ENCODE measurements at regions of chr14 and their contacts with region 1.

Region 1: DNA sequence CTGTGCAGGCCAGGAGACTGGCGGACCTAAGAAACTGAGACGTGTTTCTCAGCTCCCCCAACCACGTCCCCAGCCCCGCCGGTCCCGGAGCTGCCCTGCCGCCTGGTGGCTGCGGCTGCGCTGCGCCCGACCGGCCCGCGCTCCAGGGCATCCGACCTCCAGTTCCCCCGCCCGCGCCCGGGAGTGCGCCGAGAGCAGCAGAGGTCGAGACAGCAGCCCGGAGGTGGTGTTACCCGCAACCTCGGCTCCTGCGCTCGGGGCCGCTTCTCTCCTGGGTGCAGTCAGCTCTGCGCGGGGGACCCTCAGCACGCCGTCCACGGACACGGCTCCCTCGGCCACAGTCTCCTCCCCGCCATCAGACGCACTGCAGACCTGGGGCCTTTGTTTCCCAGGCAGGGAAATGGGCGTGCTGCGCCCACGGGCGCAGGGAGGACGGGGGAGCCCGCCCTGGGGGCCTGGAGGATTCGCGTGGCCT is 21.6 kb upstream of the GPR132 start:
- DNase-seq: peak; percentile 68
- H3K4me3 ChIP-seq: peak overlapping the region; percentile 25 to 39 (median 30)
- H3K27ac ChIP-seq: no peak overlapping the region
- H3K4me1 ChIP-seq: peaks cover 19% of the 10 kb centered on the region
- H3K27me3 ChIP-seq: peaks cover 0 to 2% of the 10 kb centered on the region in 2 experiments
- CTCF ChIP-seq: peak; percentile 82 to 89
- POLR2A ChIP-seq: no peak

Region 2: DNA sequence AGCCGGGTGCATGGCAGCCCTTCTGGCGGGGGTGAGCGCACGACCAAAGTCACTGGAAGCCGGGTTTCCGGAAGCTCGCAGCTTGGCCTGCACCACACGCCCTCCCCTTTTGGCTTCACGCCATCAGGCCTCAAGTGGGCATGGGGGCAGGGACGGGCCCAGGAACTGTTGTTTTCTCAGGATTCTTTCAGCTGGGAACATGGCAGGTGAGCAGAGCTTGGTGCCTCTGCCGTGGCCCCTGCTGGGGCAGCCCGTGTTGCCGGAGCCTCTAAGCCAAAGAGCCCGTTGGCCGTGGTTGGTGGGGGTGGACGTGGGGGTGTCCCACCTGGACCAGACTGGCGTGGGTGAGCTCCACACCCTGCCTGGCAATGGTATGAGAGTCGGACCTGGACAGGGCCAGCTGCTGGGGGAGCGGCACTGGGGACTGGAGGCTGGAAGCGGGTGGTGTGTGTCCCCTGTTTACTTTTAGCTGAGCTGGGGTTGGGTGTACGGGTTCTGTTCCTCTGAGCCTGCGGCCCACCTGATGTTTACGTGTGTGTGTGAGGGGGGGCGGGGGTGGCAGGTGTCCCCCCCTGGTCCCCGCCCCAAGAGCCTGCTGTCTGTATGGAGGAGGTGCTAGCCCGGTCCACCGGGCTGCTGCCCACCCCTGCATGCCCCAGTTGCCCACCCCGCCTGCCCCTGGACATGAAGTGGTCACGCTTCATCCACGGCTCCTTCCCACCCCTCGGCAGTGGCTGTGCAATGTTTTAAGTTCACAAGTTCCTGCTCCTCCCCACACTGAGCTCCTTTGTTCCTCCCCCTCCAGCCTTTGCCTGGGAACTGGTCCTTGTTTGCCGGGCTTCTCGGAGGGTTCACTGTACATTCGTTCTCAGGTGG is 190.8 kb before region 1 on chr14:
- CTCF ChIA-PET with region 1: interaction called, 6 read pairs
- POLR2A ChIA-PET with region 1: no interaction called
- dilution Hi-C with region 1: no loop called
- intact Hi-C with region 1: loop called (anchors 1 kb)
- DNase-seq: no peak
- H3K4me3 ChIP-seq: no peak overlapping the region
- H3K27ac ChIP-seq: no peak overlapping the region
- H3K4me1 ChIP-seq: peaks cover 16% of the 10 kb centered on the region
- H3K27me3 ChIP-seq: no peaks in the 10 kb centered on the region
- CTCF ChIP-seq: no peak
- POLR2A ChIP-seq: no peak

Region 3: DNA sequence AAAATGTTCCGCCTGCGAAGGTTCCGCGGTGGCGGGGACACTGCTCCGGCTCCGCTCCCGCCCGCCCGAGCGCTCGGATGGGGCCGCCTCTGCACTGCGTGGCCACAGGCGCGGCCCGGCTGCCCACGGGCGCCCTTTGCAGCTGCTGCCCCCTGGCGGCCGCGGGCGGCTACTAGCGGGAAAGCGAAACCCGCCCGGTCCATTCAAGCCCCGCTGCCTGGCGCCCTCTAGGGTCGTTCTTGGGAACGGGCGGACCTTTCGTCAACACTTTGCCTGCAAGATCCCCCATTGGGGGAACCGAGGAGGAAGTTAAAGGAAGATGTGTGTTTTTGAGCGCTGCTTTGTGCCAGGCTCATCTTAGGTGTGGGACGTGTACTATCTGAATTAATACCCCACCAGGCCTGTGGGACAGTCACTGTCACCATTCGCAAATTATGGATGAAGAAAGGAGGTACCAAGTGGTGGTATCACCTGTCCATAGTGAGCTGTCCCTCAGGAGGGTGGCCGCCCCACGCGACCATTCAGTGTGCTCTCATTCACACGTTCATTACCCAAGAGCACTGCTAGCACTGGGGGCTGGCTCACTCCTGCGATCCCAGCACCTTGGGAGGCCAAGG is 41.1 kb before region 1 on chr14:
- CTCF ChIA-PET with region 1: interaction called, 16 read pairs
- POLR2A ChIA-PET with region 1: no interaction called
- dilution Hi-C with region 1: no loop called
- intact Hi-C with region 1: no loop called
- DNase-seq: peak; percentile 81
- H3K4me3 ChIP-seq: no peak overlapping the region
- H3K27ac ChIP-seq: no peak overlapping the region
- H3K4me1 ChIP-seq: no peaks in the 10 kb centered on the region
- H3K27me3 ChIP-seq: peaks cover 3 to 9% of the 10 kb centered on the region in 2 experiments
- CTCF ChIP-seq: peak; percentile 100
- POLR2A ChIP-seq: no peak

Region 4: DNA sequence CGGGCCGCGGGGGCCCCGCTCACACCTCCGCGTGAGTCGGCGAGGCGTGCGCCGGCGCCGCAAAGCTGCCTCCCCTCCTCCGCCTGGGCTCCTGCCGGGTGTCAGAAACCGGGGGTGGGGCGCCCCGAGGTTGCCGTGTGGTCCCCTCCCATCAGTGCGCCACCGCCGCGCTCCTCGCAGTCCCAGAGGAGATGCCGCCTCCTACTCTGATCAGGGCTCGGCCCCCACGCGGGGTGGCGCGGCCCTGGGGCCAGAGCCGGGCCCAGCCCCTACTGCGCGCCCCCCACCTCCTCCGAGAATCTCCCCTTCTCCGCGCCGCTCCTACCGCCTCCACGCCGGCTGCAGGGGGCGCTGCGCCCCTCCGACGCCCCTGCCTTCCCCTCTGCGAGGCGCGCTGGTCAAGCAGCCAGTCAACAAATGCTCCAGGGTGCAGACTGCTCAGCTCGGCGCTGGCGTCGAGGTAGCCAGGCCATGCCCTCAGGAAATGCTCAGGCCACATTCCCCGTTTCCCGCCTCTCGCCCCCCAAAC is 82.2 kb after region 1 on chr14:
- CTCF ChIA-PET with region 1: interaction called, 15 read pairs
- POLR2A ChIA-PET with region 1: no interaction called
- dilution Hi-C with region 1: no loop called
- intact Hi-C with region 1: no loop called
- DNase-seq: peak; percentile 81
- H3K4me3 ChIP-seq: peak overlapping the region; percentile 11 to 41 (median 16)
- H3K27ac ChIP-seq: peak overlapping the region; percentile 2
- H3K4me1 ChIP-seq: peaks cover 39% of the 10 kb centered on the region
- H3K27me3 ChIP-seq: no peaks in the 10 kb centered on the region
- CTCF ChIP-seq: peak; percentile 86 to 92
- POLR2A ChIP-seq: no peak

Region 5: DNA sequence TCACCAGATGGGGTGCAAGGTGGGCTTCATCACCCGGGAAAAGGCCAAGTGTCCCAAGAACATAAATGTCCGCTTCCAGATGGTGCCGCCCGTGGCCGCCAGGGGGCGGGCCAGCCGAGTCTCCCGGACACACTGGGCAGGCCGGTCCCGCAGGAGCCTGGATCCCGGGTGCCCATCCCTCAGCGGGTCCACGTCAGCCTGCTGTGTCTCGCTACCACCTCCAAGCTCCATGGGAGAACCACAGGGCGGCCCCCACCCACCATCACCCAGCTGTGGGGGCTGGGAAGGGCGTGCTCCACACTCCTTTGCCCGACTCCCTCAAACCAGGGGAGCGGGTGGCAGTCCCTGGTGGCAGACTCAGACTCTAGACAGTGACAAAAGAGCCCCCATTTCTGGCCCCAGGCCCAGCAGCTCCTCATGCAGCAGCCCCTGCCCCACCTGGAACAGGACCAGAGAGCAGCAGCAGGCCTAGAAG is 116.2 kb after region 1 on chr14:
- CTCF ChIA-PET with region 1: interaction called, 17 read pairs
- POLR2A ChIA-PET with region 1: no interaction called
- dilution Hi-C with region 1: no loop called
- intact Hi-C with region 1: no loop called
- DNase-seq: peak; percentile 55
- H3K4me3 ChIP-seq: no peak overlapping the region
- H3K27ac ChIP-seq: no peak overlapping the region
- H3K4me1 ChIP-seq: peaks cover 24% of the 10 kb centered on the region
- H3K27me3 ChIP-seq: no peaks in the 10 kb centered on the region
- CTCF ChIP-seq: peak; percentile 94 to 96
- POLR2A ChIP-seq: no peak

Region 6: GRCh38 chr14:105292826-105293711 is 206.2 kb after region 1 on chr14:
- CTCF ChIA-PET with region 1: interaction called, 13 read pairs
- POLR2A ChIA-PET with region 1: no interaction called
- dilution Hi-C with region 1: no loop called
- intact Hi-C with region 1: no loop called
- DNase-seq: peak; percentile 64
- H3K4me3 ChIP-seq: no peak overlapping the region
- H3K27ac ChIP-seq: peak overlapping the region; percentile 46
- H3K4me1 ChIP-seq: peaks cover 27% of the 10 kb centered on the region
- H3K27me3 ChIP-seq: no peaks in the 10 kb centered on the region
- CTCF ChIP-seq: no peak
- POLR2A ChIP-seq: no peak